Activated CD8-positive, alpha-beta memory T cell treated with anti-CD3 and anti-CD28 coated beads, Interleukin-2, amount 10 ng/mL, durations not matched to agents 7 days and 5 days (primary cell): ENCODE measurements at regions of chr2 and their contacts with region 1.

Region 1: GRCh38 chr2:200483729-200484198 is 26.1 kb downstream of the KCTD18 start:
- DNase-seq: peak; percentile 49
- ATAC-seq: peak; percentile 41
- H3K4me3 Mint-ChIP-seq: no peak overlapping the region
- H3K27ac Mint-ChIP-seq: no peak overlapping the region
- H3K4me1 Mint-ChIP-seq: peaks cover 19% of the 10 kb centered on the region
- H3K27me3 Mint-ChIP-seq: no peaks in the 10 kb centered on the region

Region 2: DNA sequence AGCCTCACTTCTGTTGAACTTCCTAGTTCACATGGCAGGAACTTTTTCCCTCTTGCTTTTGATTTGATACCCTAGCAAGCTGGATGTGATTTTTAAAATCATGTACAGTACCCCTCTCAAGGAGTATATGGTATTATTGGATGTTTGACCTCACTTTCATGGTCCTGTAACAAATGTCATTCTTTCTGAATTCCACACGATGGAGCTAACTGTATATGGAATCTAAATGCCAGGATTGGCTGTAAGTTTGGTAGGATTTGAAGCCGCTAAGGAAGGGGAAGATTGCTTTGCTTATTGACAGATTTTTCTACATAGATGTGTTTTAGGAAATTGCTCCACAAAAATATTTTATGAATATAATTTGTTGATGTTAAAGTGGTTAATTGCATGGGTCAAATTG is 510.1 kb before region 1 on chr2:
- CTCF ChIA-PET with region 1: interaction called, 70 read pairs
- DNase-seq: no peak
- ATAC-seq: no peak
- H3K4me3 Mint-ChIP-seq: no peak overlapping the region
- H3K27ac Mint-ChIP-seq: no peak overlapping the region
- H3K4me1 Mint-ChIP-seq: peaks cover 26% of the 10 kb centered on the region
- H3K27me3 Mint-ChIP-seq: no peaks in the 10 kb centered on the region

Region 3: DNA sequence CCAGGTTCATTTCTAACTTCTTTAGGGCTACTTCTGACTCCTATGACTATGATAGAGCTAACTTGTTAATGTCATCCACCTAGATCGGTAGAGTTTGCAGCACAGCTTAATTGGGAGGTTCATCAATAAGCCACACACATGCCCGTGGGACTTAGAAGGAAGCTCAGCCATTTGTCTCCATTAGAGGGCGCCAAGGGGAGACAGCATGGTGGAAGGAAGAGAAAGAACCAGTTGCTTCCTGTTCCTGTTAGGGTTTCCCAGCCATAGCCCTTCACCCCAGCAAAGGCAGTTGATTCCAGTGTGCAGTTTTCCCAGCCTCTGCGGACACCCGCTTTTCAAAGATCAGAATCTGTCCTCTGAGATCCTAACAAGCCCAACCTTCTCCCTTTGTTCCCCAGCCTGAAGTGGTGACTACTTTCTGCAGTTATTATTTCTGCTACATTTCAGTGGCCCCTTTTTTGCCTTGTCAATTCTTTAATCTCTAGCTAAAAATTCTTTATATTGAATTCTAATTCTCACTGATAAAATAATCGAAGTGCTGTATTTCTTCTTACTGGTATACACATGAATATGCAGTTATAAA is 498.0 kb before region 1 on chr2:
- CTCF ChIA-PET with region 1: interaction called, 10 read pairs
- DNase-seq: peak; percentile 78
- ATAC-seq: peak; percentile 75
- H3K4me3 Mint-ChIP-seq: no peak overlapping the region
- H3K27ac Mint-ChIP-seq: no peak overlapping the region
- H3K4me1 Mint-ChIP-seq: peaks cover 5% of the 10 kb centered on the region
- H3K27me3 Mint-ChIP-seq: no peaks in the 10 kb centered on the region

Region 4: GRCh38 chr2:200471324-200471848 is 12.4 kb before region 1 on chr2:
- CTCF ChIA-PET with region 1: interaction called, 38 read pairs
- DNase-seq: peak; percentile 58
- ATAC-seq: peak; percentile 38
- H3K4me3 Mint-ChIP-seq: no peak overlapping the region
- H3K27ac Mint-ChIP-seq: peak overlapping the region; percentile 64
- H3K4me1 Mint-ChIP-seq: peaks cover 40% of the 10 kb centered on the region
- H3K27me3 Mint-ChIP-seq: no peaks in the 10 kb centered on the region

Region 5: DNA sequence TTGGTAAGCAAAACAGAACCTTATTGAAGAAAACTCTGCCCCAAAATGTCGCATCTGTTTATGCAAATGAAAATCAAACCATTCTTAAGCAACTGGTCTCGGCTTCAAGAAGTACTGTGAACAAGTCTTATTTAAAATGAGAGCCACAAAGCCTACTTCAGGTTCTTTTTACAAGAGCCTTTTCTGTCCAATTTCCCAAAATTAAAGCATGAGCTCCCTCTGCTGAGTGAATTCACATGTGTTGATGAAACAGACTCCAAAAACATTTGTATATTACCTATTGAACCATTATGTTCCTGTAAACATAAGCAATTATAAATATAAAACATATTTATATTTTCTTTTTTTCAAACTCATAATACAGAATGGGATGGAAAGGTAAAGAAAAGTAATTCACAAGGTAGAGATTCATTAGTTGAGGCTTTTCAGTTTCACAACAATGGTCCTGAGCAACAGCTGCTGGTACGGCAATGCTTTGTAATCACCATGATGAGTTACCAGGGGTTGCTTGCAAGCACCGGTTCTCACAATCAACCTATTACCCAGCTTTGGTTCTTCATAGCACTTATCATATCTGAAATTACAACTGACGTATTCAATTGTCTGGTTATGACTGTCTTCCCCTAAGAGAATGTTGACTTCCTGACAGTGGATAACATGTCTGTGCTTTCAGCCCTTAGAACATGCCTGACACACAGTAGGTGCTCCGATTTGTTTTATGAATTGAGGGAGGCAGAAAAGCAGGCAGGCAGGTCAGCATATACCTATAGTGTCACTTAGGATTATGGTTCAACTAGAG is 219.6 kb after region 1 on chr2:
- CTCF ChIA-PET with region 1: interaction called, 14 read pairs
- DNase-seq: no peak
- ATAC-seq: peak; percentile 78
- H3K4me3 Mint-ChIP-seq: no peak overlapping the region
- H3K27ac Mint-ChIP-seq: peak overlapping the region; percentile 61
- H3K4me1 Mint-ChIP-seq: peaks cover 29% of the 10 kb centered on the region
- H3K27me3 Mint-ChIP-seq: no peaks in the 10 kb centered on the region